Activated CD8-positive, alpha-beta memory T cell treated with anti-CD3 and anti-CD28 coated beads, Interleukin-2, amount 10 ng/mL, durations not matched to agents 7 days and 5 days (primary cell): ENCODE measurements at regions of chr17 and their contacts with region 1.

Region 1: DNA sequence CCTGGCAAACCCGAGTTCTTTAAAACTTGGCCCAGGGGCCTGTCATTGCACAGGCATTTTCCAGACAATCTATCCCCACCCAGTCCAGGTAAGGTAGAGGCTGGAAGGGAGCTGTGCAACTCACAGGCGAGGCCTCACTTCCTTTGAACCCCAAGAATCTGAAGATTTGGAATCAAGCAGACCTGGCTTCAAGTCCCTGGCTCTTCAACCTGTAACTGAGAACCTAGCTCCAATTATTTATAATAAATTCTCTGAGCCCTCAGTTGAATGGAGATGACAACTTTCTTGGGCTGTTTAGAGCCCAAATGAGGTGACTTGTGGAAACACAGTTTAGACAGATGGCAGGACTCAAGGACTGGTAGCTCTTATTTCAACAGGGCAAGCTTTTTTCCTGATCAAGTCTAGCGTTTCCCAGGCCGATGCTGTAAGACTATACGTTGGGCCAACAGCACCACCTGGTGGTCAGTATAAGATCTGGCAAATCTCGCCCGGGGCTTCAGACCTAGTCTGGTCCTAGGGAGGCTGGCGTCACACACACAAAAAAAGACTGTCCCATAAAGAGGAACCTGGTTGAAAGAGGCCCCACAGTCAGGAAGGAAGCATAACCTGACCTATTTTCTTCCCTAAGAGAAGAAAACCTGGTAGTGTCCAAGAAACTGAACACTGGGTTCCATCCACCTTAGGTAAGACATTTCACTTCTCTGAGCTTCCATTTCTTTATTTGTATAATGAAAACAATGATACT is 117.9 kb downstream of the C17orf67 start:
- DNase-seq: peak; percentile 81
- ATAC-seq: peak; percentile 90
- H3K4me3 Mint-ChIP-seq: no peak overlapping the region
- H3K27ac Mint-ChIP-seq: no peak overlapping the region
- H3K4me1 Mint-ChIP-seq: peaks cover 7% of the 10 kb centered on the region
- H3K27me3 Mint-ChIP-seq: peaks cover 18% of the 10 kb centered on the region

Region 2: DNA sequence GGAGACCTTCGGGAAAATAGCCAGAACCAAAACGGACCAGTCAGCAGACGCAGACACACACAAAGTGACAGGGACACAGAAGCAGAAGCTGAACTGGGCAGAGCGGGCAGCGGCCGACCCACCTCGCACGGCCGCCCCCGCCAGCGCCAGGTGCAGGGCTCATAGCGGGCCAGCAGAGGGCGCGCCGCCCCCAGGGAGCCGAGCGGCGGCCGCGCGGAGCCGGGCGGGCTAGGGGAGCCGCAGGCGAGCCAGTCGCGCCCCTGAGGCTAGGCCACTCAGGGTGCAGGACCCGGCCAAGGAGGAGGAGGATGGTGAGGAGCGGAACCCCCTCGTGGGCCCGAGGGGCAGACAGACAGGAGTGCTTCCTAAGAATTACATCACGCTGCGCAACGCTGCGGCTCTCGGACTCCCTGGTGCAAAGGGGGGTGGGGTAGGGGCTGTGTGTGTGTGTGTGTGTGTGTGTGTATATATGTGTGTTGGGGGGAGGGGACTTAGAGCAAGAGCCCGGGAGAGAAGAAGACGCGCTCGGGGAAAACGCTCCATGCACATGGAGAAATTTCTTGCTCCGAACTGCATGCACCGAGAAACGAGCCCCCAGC is 123.2 kb before region 1 on chr17:
- CTCF ChIA-PET with region 1: interaction called, 172 read pairs
- DNase-seq: peak; percentile 59
- ATAC-seq: peak; percentile 75
- H3K4me3 Mint-ChIP-seq: no peak overlapping the region
- H3K27ac Mint-ChIP-seq: no peak overlapping the region
- H3K4me1 Mint-ChIP-seq: peaks cover 19% of the 10 kb centered on the region
- H3K27me3 Mint-ChIP-seq: peaks cover 64% of the 10 kb centered on the region

Region 3: GRCh38 chr17:56681561-56682266 is 34.1 kb before region 1 on chr17:
- CTCF ChIA-PET with region 1: interaction called, 16 read pairs
- DNase-seq: peak; percentile 55
- ATAC-seq: peak; percentile 60
- H3K4me3 Mint-ChIP-seq: no peak overlapping the region
- H3K27ac Mint-ChIP-seq: no peak overlapping the region
- H3K4me1 Mint-ChIP-seq: peaks cover 9% of the 10 kb centered on the region
- H3K27me3 Mint-ChIP-seq: peaks cover 36% of the 10 kb centered on the region

Region 4: GRCh38 chr17:56699186-56699895 is 16.4 kb before region 1 on chr17:
- CTCF ChIA-PET with region 1: interaction called, 11 read pairs
- DNase-seq: no peak
- ATAC-seq: no peak
- H3K4me3 Mint-ChIP-seq: no peak overlapping the region
- H3K27ac Mint-ChIP-seq: no peak overlapping the region
- H3K4me1 Mint-ChIP-seq: no peaks in the 10 kb centered on the region
- H3K27me3 Mint-ChIP-seq: peaks cover 38% of the 10 kb centered on the region

Region 5: GRCh38 chr17:56737366-56738161 is 21.8 kb after region 1 on chr17:
- CTCF ChIA-PET with region 1: no interaction called
- DNase-seq: no peak
- ATAC-seq: no peak
- H3K4me3 Mint-ChIP-seq: no peak overlapping the region
- H3K27ac Mint-ChIP-seq: no peak overlapping the region
- H3K4me1 Mint-ChIP-seq: no peaks in the 10 kb centered on the region
- H3K27me3 Mint-ChIP-seq: peaks cover 12% of the 10 kb centered on the region